ENCODE measurements at regions of chr4 and their contacts with region 1.

Region 1: GRCh38 chr4:74675673-74676279 is 118.5 kb downstream of the BTC start:
- DNase-seq: peak in 1 of 3 donors; percentile 62
- ATAC-seq: peak; percentile 88
- H3K4me3 ChIP-seq: no peak overlapping the region
- H3K4me1 ChIP-seq: no peaks in the 10 kb centered on the region
- CTCF ChIP-seq: peak; percentile 45

Region 2: GRCh38 chr4:74320559-74321118 is 355.1 kb before region 1 on chr4:
- intact Hi-C with region 1: loop called in 1 of 2 experiments (anchors 5 kb)
- DNase-seq: peak; percentile 41 to 67 (median 62)
- ATAC-seq: peak; percentile 98
- H3K4me3 ChIP-seq: no peak overlapping the region
- H3K4me1 ChIP-seq: no peaks in the 10 kb centered on the region
- CTCF ChIP-seq: no peak

Region 3: DNA sequence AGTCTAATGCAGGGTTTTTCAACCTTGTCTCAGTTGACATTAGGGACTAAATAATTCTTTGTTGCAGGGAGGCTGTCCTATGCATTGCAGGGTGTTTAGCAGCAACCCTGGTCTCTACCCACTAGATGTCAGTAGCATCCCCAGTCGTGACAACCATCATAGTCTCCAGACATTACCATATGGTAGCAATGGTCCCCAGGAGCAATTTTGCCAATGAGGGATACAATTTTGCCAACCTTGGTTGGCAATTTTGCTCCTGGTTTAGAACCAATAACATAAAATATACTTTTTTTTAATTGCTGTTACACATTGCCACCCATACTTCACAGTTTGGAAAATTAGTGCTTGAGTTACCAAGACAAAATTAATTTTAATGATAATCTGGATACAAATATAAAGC is 304.9 kb before region 1 on chr4:
- intact Hi-C with region 1: loop called in 1 of 2 experiments (anchors 5 kb)
- DNase-seq: peak in 1 of 3 donors; percentile 57
- ATAC-seq: peak; percentile 51
- H3K4me3 ChIP-seq: no peak overlapping the region
- H3K4me1 ChIP-seq: peaks cover 9% of the 10 kb centered on the region
- CTCF ChIP-seq: peak; percentile 22

Region 4: GRCh38 chr4:74376888-74377483 is 298.8 kb before region 1 on chr4:
- intact Hi-C with region 1: loop called (anchors 5 kb)
- DNase-seq: peak in 1 of 3 donors; percentile 24
- ATAC-seq: peak; percentile 58
- H3K4me3 ChIP-seq: no peak overlapping the region
- H3K4me1 ChIP-seq: peaks cover 8% of the 10 kb centered on the region
- CTCF ChIP-seq: peak; percentile 13

Region 5: DNA sequence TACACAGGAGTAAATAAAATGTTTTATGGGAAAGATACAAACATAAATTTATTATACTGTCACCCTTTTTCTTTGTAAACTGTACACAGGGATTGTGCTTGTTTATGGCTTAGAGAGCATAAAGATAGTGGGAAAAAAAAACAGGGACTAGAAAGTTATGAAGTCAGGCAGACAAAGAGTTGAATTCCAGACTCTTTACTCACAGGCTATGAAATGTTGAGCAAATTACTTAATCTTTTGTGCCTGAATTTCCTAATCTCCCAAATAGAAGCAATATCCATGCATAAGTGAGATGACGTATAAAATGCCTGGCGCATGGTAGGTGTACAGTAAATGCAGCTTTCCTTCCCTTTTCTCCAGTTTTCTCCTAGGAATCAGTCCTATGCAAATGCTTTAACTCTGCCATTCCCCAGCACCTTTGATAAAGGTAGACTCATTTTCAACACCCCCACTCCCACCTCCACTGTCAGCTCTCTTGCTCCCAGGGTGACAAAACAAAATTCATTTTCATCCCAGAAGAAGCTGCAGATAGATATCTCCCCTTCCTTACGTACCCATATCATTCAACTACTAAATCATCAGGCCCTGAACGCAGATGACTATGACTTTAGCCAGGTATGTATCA is 163.1 kb after region 1 on chr4:
- intact Hi-C with region 1: no loop called
- DNase-seq: no peak
- ATAC-seq: no peak
- H3K4me3 ChIP-seq: no peak overlapping the region
- H3K4me1 ChIP-seq: no peaks in the 10 kb centered on the region
- CTCF ChIP-seq: no peak

Measured in mucosa of descending colon (tissue), 3 donors.